CD8-positive, alpha-beta T cell (primary cell): ENCODE measurements at regions of chr19 and their contacts with region 1.

Region 1: DNA sequence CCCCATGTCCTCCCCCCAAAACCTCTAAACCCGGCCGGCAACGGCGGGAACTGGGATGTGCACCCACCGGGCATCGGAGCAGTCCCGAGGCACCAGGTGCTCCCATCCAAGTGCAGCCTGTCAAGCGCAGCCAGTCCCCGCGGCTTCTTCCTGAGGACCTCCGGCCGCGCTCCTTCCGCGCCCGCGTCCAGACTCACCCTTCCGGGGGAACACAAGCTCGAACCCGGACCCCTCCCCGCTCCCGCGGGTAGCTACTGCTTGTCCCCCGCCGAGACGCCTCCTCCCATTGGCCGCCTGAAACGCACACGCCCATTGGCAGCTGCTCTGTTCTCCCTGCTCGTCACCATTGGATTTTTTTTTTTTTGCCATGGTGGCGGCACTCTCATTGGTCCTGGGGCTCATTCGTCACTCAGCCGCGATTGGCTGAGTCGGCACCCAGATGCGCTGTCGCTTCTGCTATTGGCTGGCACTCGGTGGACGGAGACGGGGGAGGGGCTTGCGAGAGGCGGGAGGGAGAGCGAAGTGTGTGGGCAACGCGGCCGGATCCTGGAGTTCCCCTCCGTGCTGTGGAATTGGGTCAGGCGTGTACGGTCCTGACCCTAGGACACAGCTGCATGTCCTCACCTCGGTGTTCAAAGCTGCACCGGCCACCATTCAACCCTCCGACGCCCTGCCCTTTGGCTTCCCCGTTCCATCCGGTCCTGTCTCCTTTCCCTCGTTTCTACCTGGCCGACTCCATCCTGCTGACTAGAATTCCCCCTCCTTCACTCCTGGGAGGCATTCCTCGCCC is at the start of gene TYK2:
- DNase-seq: peak; percentile 91 to 99 (median 96)
- ATAC-seq: peak; percentile 98
- H3K4me3 ChIP-seq: peak within 1 kb of the TSS; percentile 73 to 84
- H3K4me3 Mint-ChIP-seq: peak within 1 kb of the TSS; percentile 96
- H3K27ac ChIP-seq: peak within 1 kb of the TSS; percentile 76 to 88
- H3K27ac Mint-ChIP-seq: peak within 1 kb of the TSS; percentile 96
- H3K4me1 ChIP-seq: peaks cover 9% of the 10 kb centered on the region
- H3K4me1 Mint-ChIP-seq: peaks cover 22% of the 10 kb centered on the region
- H3K27me3 ChIP-seq: no peaks in the 10 kb centered on the region
- H3K27me3 Mint-ChIP-seq: no peaks in the 10 kb centered on the region
- CTCF ChIP-seq: no peak
- total RNA-seq, gene TYK2: 244 to 250 TPM

Region 2: GRCh38 chr19:10173257-10173926 is 207.1 kb before region 1 on chr19:
- CTCF ChIA-PET with region 1: no interaction called
- POLR2A ChIA-PET with region 1: no interaction called
- intact Hi-C with region 1: no loop called
- DNase-seq: no peak
- ATAC-seq: no peak
- H3K4me3 ChIP-seq: no peak overlapping the region
- H3K4me3 Mint-ChIP-seq: no peak overlapping the region
- H3K27ac ChIP-seq: no peak overlapping the region
- H3K27ac Mint-ChIP-seq: no peak overlapping the region
- H3K4me1 ChIP-seq: no peaks in the 10 kb centered on the region
- H3K4me1 Mint-ChIP-seq: peaks cover 2% of the 10 kb centered on the region
- H3K27me3 ChIP-seq: no peaks in the 10 kb centered on the region
- H3K27me3 Mint-ChIP-seq: no peaks in the 10 kb centered on the region
- CTCF ChIP-seq: no peak

Region 3: DNA sequence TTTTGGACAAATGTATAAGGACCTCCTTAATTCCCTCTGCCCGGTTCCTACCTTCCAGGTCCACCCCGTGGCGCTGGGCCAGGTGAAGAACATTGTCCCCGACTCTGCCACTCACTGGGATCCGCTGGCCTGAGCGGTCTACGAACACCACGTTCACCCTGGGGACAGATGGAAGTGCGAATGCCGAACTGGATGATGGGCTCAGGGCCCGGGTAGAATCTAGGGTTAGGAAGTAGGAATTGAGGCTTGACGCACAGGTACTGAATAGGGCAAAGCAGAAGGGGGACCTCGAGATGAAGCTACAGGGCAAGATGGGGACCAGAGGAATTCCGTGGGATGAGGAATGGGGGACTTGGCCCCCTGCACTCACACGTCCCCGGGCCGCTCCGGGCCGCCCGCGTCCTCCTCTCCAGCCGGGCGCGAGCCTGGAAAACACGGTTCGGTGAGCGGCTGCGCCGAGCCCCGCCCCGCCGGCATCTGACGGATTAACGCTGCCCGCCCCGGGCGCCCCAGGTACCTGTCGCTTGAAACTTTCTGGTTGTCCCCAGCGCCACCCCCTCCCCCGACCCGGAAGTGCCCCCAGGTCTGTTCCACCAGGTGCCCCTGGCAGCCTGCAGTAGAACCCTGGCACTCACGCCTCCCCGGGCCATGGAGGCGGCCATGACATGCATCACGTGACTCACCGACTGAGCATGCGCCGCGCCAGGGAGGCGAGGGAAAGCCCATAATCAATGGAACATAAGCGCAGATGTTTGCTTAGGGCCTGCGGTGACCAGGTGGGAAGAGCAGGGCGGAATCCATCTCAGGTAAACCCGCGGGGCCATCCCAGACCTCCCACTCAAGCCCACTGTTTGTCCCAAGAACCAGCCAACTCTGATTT is 64.9 kb before region 1 on chr19 and contains the start of gene FDX2:
- CTCF ChIA-PET with region 1: no interaction called
- POLR2A ChIA-PET with region 1: no interaction called
- intact Hi-C with region 1: loop called in 1 of 2 experiments (anchors 5 kb)
- DNase-seq: peak; percentile 76 to 94 (median 91)
- ATAC-seq: peak; percentile 91
- H3K4me3 ChIP-seq: peak within 1 kb of the TSS; percentile 58 to 94
- H3K4me3 Mint-ChIP-seq: peak within 1 kb of the TSS; percentile 90
- H3K27ac ChIP-seq: peak within 1 kb of the TSS; percentile 41 to 51
- H3K27ac Mint-ChIP-seq: peak within 1 kb of the TSS; percentile 89
- H3K4me1 ChIP-seq: peaks cover 13% of the 10 kb centered on the region
- H3K4me1 Mint-ChIP-seq: peaks cover 12% of the 10 kb centered on the region
- H3K27me3 ChIP-seq: no peaks in the 10 kb centered on the region
- H3K27me3 Mint-ChIP-seq: no peaks in the 10 kb centered on the region
- CTCF ChIP-seq: no peak
- total RNA-seq, gene FDX2: 3.1 to 4.2 TPM

Region 4: DNA sequence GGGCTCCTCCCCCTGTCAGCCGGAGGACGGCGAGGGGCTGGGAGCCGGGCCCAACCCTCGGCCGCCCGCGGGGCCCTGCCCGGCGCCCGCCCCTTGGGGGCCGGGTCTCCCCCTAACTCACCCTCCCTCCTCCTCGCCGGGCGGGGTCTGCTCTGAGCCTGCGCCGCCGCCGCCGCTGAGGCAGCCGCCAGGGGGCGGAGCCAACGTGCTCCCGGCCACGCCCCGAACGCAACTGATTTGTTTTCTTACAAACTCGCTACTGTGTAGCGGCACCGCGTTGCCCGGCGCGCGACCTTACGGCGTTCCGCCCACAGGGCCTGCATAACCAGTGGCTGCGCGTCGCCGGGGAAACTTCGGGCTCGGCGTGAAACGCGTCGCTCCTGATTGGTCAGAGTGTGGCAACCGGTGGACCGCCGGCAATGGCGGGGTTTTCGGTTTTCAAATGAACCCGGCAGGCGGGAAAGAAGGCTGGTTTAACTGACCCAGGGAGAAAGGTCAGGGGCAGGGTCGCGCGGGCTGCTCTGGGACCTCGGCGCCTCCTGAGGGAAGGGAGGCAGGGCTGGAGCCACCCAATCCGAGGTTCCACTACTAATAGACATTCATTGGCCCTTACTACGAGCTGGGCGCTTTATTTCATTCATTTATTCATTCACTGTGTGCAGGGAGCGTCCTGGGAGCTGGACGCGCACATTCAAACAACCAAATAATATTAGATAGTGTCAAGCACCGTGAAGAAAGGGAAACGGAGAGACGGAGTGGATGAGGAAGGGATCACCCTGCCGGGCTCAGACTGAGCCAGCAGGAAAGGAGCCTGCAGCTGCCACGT is 188.5 kb after region 1 on chr19 and contains the start of gene CDKN2D:
- CTCF ChIA-PET with region 1: no interaction called
- POLR2A ChIA-PET with region 1: no interaction called
- intact Hi-C with region 1: no loop called
- DNase-seq: peak; percentile 99 to 100 (median 100)
- ATAC-seq: peak; percentile 69
- H3K4me3 ChIP-seq: peak within 1 kb of the TSS; percentile 95 to 97
- H3K4me3 Mint-ChIP-seq: peak within 1 kb of the TSS; percentile 98
- H3K27ac ChIP-seq: peak within 1 kb of the TSS; percentile 71
- H3K27ac Mint-ChIP-seq: peak within 1 kb of the TSS; percentile 95
- H3K4me1 ChIP-seq: peaks cover 36% of the 10 kb centered on the region
- H3K4me1 Mint-ChIP-seq: peaks cover 43% of the 10 kb centered on the region
- H3K27me3 ChIP-seq: no peaks in the 10 kb centered on the region
- H3K27me3 Mint-ChIP-seq: no peaks in the 10 kb centered on the region
- CTCF ChIP-seq: no peak
- total RNA-seq, gene CDKN2D: 58.5 to 61.3 TPM